BJ (cell line): ENCODE measurements at regions of chr21 and their contacts with region 1.

Region 1: DNA sequence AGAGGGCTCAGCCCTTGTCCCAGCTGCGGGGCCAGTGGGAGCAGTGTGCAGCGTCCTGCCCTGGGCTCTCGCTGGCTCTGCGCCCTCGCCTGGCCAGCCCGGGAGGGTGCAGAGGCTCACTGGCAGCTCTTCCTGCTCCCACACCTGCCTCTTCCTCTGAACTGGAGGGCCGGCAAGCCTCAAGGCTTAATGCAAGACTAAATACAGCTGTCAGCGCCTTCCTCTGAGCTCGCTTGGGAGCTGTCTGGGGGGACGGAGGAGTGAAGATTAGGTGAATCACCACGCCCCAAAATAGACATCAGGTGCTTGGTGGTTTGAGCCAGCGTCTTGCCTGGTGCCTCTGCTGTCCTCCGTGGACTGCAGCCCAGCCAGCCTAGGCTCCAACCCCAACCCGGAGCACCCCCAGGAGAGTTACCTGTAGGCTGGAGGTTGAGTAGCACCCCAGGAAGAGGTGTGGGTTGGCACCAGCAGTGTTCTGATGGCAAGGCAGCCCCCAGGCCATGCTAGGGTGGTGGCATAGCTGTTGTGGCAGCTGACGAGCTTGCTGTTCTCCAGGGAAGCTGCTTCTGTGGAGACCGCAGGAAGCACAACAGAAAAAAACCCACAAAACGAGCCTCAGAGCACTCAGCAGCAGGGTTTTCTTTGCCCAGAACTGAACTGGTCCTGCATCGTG is 36.9 kb downstream of the UMODL1 start:
- DNase-seq: no peak
- H3K4me3 ChIP-seq: no peak overlapping the region
- H3K27me3 ChIP-seq: no peaks in the 10 kb centered on the region; the same call in 1 of the 2 replicates
- CTCF ChIP-seq: peak; percentile 93

Region 2: GRCh38 chr21:41777951-41778874 is 329.8 kb before region 1 on chr21:
- CTCF ChIA-PET with region 1: no interaction called
- POLR2A ChIA-PET with region 1: interaction called, 14 read pairs
- DNase-seq: no peak
- H3K4me3 ChIP-seq: no peak overlapping the region
- H3K27me3 ChIP-seq: peaks cover 5% of the 10 kb centered on the region
- CTCF ChIP-seq: peak; percentile 98

Region 3: GRCh38 chr21:42006765-42007164 is 101.3 kb before region 1 on chr21:
- CTCF ChIA-PET with region 1: interaction called, 23 read pairs
- POLR2A ChIA-PET with region 1: no interaction called
- DNase-seq: no peak
- H3K4me3 ChIP-seq: no peak overlapping the region
- H3K27me3 ChIP-seq: no peaks in the 10 kb centered on the region
- CTCF ChIP-seq: no peak

Region 4: GRCh38 chr21:42025376-42026081 is 82.5 kb before region 1 on chr21:
- CTCF ChIA-PET with region 1: interaction called, 16 read pairs
- POLR2A ChIA-PET with region 1: no interaction called
- DNase-seq: peak; percentile 67
- H3K4me3 ChIP-seq: no peak overlapping the region
- H3K27me3 ChIP-seq: no peaks in the 10 kb centered on the region
- CTCF ChIP-seq: no peak

Region 5: DNA sequence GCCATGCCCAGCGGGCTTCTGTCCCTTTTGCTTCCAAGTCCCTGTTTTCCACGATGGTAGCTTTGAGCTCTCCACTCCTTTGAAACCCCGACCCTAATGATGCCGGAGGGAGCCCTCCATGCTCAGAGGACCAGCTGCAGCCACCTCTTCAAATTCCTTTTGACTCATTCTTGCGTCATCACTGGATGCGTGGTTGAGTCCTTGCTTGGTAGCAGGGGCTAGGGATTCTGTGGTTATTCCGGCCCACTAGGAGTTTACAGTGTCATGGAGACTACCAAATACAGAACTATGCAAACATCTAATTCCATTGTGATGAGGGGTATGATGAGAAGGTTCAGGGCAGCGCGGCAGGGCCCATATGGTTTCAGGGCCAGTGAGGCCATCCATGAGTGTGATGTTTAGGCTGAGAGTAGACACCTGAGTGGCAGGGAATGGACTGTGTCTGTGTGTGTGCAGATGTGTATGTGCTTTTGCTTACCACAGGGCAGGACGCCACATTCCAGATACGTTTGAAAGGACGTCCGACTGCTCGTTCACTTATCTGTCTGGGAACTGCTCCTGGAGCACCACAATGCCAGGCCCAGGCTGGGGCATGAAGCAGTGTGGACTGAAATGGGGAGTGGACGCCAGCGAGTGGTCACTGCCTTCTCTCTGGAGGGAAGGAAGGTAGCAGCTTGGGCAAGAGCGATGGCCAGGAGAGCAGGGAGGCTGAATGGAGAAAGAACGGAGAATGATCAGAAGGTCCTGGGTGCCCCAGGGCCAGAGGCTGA is 67.4 kb before region 1 on chr21:
- CTCF ChIA-PET with region 1: interaction called, 13 read pairs
- POLR2A ChIA-PET with region 1: no interaction called
- DNase-seq: peak; percentile 98
- H3K4me3 ChIP-seq: no peak overlapping the region
- H3K27me3 ChIP-seq: no peaks in the 10 kb centered on the region
- CTCF ChIP-seq: no peak

Region 6: DNA sequence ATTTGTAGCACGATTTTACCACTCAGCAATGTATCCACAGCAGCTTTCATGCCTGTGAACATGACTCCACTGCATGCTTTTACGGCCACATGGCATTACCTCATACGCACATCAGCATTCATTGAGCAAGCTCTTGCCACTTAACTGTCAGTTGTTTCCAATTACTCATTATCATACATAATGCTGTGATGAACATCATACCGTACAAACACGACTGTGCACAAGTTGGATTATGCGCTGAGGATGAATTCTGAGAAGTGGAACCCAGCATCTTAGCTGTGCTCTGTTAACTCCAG is 27.3 kb before region 1 on chr21:
- CTCF ChIA-PET with region 1: interaction called, 10 read pairs
- POLR2A ChIA-PET with region 1: no interaction called
- DNase-seq: peak; percentile 86
- H3K4me3 ChIP-seq: no peak overlapping the region
- H3K27me3 ChIP-seq: no peaks in the 10 kb centered on the region
- CTCF ChIP-seq: no peak

Region 7: GRCh38 chr21:42097860-42098454 is 10.1 kb before region 1 on chr21:
- CTCF ChIA-PET with region 1: interaction called, 47 read pairs
- POLR2A ChIA-PET with region 1: no interaction called
- DNase-seq: peak; percentile 91
- H3K4me3 ChIP-seq: no peak overlapping the region
- H3K27me3 ChIP-seq: no peaks in the 10 kb centered on the region
- CTCF ChIP-seq: no peak

Region 8: GRCh38 chr21:42135386-42136052 is 27.5 kb after region 1 on chr21:
- CTCF ChIA-PET with region 1: no interaction called
- POLR2A ChIA-PET with region 1: no interaction called
- DNase-seq: no peak
- H3K4me3 ChIP-seq: no peak overlapping the region
- H3K27me3 ChIP-seq: peaks cover 2% of the 10 kb centered on the region; the same call in 1 of the 2 replicates
- CTCF ChIP-seq: no peak